ENCODE measurements at regions of chr1 and their contacts with region 1.

Region 1: GRCh38 chr1:90262791-90263190 is 267.9 kb downstream of the ZNF326 start:
- DNase-seq: peak in 1 of 2 donors; percentile 67
- H3K4me3 ChIP-seq: no peak overlapping the region
- H3K27ac ChIP-seq: no peak overlapping the region
- H3K4me1 ChIP-seq: peaks cover 0 to 9% of the 10 kb centered on the region in 2 donors
- H3K27me3 ChIP-seq: no peaks in the 10 kb centered on the region
- CTCF ChIP-seq: no peak

Region 2: DNA sequence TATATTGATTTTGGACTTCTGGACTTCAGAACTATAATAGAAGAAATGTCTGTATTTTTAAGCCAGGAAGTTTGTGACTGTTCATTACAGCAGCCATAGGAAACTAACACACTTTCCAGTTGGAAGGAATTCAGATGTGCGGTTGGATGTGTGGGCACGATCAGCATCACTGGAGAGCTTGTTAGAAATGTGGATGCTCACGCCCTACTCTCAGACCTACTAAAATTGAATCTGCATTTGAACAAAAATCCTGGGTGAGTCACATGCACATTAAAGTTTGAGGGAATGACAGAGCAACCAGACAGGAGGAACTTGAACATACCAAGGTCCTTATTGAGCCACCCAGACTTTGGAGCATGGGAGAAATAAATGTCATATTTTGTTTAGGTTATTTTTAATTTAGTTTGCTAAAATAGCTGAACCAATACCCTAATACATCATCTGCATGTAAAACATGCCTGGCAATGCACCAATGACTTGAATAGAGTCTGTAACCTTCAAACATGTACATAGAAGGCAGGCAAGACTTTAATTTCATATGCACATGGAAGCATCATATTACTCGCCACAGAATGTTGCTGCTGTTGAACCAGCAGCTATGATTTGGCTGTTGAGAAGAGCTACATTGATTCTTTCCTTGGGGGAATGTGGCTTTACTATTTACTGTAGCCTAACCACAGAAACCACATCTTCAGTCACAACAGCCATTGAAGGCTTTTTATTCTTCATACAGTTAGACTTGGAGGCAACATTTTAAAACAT is 108.1 kb after region 1 on chr1:
- intact Hi-C with region 1: loop called (anchors 5 kb)
- DNase-seq: no peak
- H3K4me3 ChIP-seq: no peak overlapping the region
- H3K27ac ChIP-seq: peak overlapping the region; percentile 9 to 51
- H3K4me1 ChIP-seq: peaks cover 4 to 9% of the 10 kb centered on the region in 2 donors
- H3K27me3 ChIP-seq: no peaks in the 10 kb centered on the region
- CTCF ChIP-seq: no peak

Region 3: GRCh38 chr1:90386899-90387720 is 124.3 kb after region 1 on chr1:
- intact Hi-C with region 1: loop called (anchors 5 kb)
- DNase-seq: no peak
- H3K4me3 ChIP-seq: no peak overlapping the region
- H3K27ac ChIP-seq: peak overlapping the region; percentile 48 to 62
- H3K4me1 ChIP-seq: peaks cover 0 to 8% of the 10 kb centered on the region in 2 donors
- H3K27me3 ChIP-seq: no peaks in the 10 kb centered on the region
- CTCF ChIP-seq: no peak